ENCODE measurements at regions of chr7 and their contacts with region 1.

Region 1: DNA sequence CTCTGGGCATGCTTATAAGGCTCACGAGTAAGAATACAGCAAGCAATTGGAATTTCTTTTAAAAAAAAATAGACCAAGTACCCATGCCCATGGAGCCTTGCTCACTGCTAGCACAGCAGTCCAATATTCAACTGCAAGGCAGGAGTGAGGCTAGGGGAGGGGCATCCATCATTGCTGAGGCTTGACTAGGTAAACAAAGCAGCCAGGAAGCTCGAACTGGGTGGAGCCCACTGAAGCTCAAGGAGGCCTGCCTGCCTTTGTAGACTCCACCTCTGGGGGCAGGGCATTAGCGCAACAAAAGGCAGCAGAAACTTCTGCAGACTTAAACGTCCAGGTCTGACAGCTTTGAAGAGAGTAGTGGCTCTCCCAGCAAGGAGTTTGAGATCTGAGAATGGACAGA is 84.0 kb upstream of the STEAP1 start:
- DNase-seq: no peak
- ATAC-seq: no peak
- H3K4me3 ChIP-seq: no peak overlapping the region
- H3K4me3 Mint-ChIP-seq: no peak overlapping the region
- H3K27ac ChIP-seq: no peak overlapping the region
- H3K27ac Mint-ChIP-seq: no peak overlapping the region
- H3K4me1 ChIP-seq: no peaks in the 10 kb centered on the region
- H3K4me1 Mint-ChIP-seq: no peaks in the 10 kb centered on the region
- H3K27me3 ChIP-seq: no peaks in the 10 kb centered on the region
- H3K27me3 Mint-ChIP-seq: no peaks in the 10 kb centered on the region
- CTCF ChIP-seq: no peak

Region 2: DNA sequence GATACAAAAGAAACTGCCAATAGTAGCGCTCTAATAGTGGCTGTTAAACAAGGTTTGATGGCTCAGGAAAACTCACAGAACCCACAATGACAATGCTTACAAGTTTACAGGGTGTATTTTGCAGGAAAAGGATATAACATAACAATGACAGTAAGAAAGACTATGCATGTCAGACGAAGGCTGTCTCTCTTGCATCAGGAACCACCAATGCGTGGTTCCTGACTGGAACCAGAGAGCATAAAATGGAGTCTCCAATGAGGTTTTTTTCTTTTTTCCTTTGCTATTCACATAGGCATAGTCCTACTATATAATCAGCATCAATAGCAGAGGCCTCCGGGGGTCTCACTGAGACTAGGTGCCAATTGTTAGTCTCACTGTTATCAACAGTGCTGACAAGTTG is 36.4 kb before region 1 on chr7:
- CTCF ChIA-PET with region 1: no interaction called
- POLR2A ChIA-PET with region 1: no interaction called
- intact Hi-C with region 1: no loop called
- DNase-seq: no peak
- ATAC-seq: no peak
- H3K4me3 ChIP-seq: no peak overlapping the region
- H3K4me3 Mint-ChIP-seq: no peak overlapping the region
- H3K27ac ChIP-seq: no peak overlapping the region
- H3K27ac Mint-ChIP-seq: no peak overlapping the region
- H3K4me1 ChIP-seq: no peaks in the 10 kb centered on the region
- H3K4me1 Mint-ChIP-seq: no peaks in the 10 kb centered on the region
- H3K27me3 ChIP-seq: no peaks in the 10 kb centered on the region
- H3K27me3 Mint-ChIP-seq: no peaks in the 10 kb centered on the region
- CTCF ChIP-seq: no peak

Region 3: GRCh38 chr7:90094030-90094429 is 23.8 kb after region 1 on chr7:
- CTCF ChIA-PET with region 1: no interaction called
- POLR2A ChIA-PET with region 1: no interaction called
- intact Hi-C with region 1: loop called in 1 of 2 experiments (anchors 2 kb)
- DNase-seq: no peak
- ATAC-seq: no peak
- H3K4me3 ChIP-seq: no peak overlapping the region
- H3K4me3 Mint-ChIP-seq: no peak overlapping the region
- H3K27ac ChIP-seq: no peak overlapping the region
- H3K27ac Mint-ChIP-seq: no peak overlapping the region
- H3K4me1 ChIP-seq: no peaks in the 10 kb centered on the region
- H3K4me1 Mint-ChIP-seq: no peaks in the 10 kb centered on the region
- H3K27me3 ChIP-seq: no peaks in the 10 kb centered on the region
- H3K27me3 Mint-ChIP-seq: peaks cover 2% of the 10 kb centered on the region
- CTCF ChIP-seq: no peak